Gastrocnemius medialis (tissue), 4 donors: ENCODE measurements at regions of chr1 and their contacts with region 1.

Region 1: DNA sequence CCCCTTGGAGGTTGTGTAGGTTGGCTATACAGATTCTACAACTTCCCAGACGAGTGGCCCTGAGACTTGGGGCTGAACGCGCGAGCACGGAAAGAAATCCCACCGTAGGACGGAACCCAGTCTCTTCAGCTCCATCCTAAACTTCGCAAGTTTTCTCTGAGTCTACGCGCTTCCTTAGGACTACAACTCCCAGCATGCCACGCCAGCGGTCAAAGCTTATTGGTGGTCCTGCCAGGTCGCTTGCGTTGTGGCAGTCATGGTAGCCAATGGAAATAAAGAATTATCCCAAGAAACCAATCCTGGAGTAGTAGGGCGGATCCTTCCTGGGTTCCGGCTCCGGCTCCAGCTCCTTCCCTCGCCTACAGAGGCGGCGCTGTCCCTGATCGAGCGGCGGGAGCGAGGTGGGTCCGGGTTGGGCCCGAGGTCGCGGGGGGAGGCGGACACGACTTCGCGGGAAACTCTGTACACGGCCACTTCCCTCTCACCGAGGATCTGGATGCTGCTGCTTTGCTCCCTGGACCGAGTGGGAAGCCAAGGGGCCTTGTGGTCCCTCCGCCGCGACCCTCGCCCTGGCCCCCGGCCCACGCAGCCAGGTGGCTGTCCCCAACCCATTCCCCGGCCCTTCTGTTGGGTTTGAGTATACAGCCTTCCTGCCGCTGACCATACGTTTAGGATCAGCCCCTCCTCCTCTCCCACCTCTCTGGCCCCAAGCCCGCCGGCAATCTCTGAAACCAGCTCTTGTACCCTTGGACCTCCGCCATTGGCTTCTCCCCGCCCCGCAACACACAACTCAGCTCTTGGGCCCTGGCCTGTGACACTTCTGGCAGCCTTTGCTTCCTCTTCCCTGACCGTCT is at the start of gene ZNF691:
- DNase-seq: peak; percentile 96 to 97
- ATAC-seq: peak; percentile 100
- H3K4me3 ChIP-seq: peak within 1 kb of the TSS; percentile 79 to 99 (median 98)
- H3K27ac ChIP-seq: peak within 1 kb of the TSS; percentile 92 to 96 (median 94)
- H3K4me1 ChIP-seq: peaks cover 18 to 23% of the 10 kb centered on the region in 2 donors
- H3K27me3 ChIP-seq: no peaks in the 10 kb centered on the region
- CTCF ChIP-seq: peak; percentile 11 to 63 (median 23)
- POLR2A ChIP-seq: peak; percentile 65 to 74
- total RNA-seq, gene ZNF691: 7.1 to 25.5 (median 9.8) TPM

Region 2: DNA sequence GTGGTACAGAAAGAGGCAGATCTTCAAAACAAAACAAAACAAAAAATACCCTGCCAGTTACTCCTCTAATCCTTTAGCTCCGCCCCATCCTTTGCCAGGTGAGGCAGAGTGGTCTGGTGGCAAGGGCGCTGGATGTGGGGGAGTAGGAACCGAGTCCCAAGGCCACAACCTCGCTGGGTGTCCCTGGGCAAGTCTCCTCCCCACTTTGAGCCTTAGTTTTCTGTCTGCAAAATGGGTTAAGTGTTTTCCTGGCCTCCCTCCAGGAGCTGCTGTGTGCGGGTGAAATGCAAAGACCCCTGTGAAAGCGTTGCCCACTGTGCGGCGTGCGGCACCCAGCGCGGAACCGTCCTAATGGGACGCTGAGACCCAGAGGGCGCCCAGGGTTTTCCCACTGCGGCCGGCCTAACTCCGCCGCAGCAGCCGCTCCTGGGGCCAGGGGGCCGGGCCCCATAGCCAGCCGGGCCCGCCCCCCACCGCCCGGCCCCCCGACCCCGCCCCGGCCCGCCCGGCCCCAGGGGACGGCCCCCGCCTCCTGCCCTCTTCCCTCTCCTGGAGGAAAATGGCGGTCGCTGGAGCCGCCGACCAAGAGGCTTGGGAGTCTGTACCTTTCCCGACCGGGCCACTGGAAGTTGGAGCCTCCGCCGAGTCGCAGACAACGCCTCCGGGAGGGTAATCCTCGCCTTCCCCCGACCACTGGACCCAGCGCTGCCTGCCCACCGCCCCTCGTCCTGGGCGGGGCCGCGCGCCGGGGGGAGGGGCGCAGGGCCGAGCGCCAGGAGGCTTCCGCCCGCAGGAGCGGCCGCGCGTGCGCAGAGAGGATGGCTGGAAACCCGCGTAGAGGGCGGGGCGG is 29.7 kb before region 1 on chr1 and contains the starts of genes ERMAP and SVBP:
- in situ Hi-C with region 1: no loop called
- intact Hi-C with region 1: loop called (anchors 1 kb)
- DNase-seq: peak; percentile 84 to 87
- ATAC-seq: peak; percentile 97
- H3K4me3 ChIP-seq: peak within 1 kb of the TSS; percentile 65 to 95 (median 76)
- H3K27ac ChIP-seq: peak within 1 kb of the TSS; percentile 88 to 100 (median 96)
- H3K4me1 ChIP-seq: peaks cover 2 to 20% of the 10 kb centered on the region in 2 donors
- H3K27me3 ChIP-seq: no peaks in the 10 kb centered on the region
- CTCF ChIP-seq: no peak
- POLR2A ChIP-seq: no peak
- total RNA-seq, gene ERMAP: 1.4 to 6.5 (median 3.9) TPM
- total RNA-seq, gene SVBP: 15.5 to 26.4 (median 24.9) TPM